H1 (cell line): ENCODE measurements at regions of chr6 and their contacts with region 1.

Region 1: DNA sequence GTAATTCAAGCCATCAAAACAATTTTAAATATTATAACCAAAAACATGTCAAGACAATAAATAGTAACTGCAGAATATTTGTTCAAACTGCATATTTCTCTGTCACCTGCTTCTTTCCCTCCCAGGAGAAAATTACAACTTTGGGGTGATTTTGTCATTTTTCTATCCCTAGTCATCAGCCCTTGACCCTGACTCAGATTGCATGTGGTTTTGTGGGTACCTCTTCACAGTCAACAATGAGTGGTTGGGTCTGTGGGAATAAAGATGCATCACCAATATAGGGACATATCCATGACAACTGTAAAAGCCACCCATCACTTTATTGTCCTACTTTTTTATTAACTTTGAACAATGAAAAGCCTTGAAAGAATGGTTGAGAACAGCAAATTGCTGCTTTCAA is 7.3 kb downstream of the COL10A1 start:
- DNase-seq: no peak
- H3K4me3 ChIP-seq: no peak overlapping the region
- H3K27ac ChIP-seq: no peak overlapping the region
- H3K4me1 ChIP-seq: no peaks in the 10 kb centered on the region
- H3K27me3 ChIP-seq: no peaks in the 10 kb centered on the region
- CTCF ChIP-seq: no peak
- EP300 ChIP-seq: no peak
- POLR2A ChIP-seq: no peak
- RAD21 ChIP-seq: no peak

Region 2: DNA sequence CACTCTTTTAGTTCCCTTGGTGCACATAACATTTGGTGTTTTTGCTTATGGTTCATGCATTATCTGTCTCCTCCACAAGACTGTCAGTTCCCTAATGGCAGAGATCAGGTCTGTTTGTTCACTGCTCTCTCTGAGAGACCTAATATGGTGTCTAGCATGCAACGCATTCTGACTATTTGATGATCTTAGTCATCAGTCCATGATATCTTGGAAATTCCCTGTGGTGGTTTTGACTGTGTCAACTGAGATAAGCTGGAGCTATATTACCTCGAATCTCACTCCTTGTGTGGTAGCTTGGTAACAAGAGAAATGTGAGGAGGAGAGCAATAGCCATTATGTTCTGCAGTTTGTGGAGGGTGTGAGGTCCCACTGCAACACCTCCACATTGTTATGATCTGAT is 287.7 kb before region 1 on chr6:
- CTCF ChIA-PET with region 1: no interaction called
- POLR2A ChIA-PET with region 1: no interaction called
- DNase-seq: no peak
- H3K4me3 ChIP-seq: no peak overlapping the region
- H3K27ac ChIP-seq: no peak overlapping the region
- H3K4me1 ChIP-seq: peaks cover 0 to 2% (median 0%) of the 10 kb centered on the region in 4 experiments; a peak in 1 of 7 replicates
- H3K27me3 ChIP-seq: no peaks in the 10 kb centered on the region
- CTCF ChIP-seq: no peak
- EP300 ChIP-seq: no peak
- POLR2A ChIP-seq: no peak
- RAD21 ChIP-seq: no peak

Region 3: DNA sequence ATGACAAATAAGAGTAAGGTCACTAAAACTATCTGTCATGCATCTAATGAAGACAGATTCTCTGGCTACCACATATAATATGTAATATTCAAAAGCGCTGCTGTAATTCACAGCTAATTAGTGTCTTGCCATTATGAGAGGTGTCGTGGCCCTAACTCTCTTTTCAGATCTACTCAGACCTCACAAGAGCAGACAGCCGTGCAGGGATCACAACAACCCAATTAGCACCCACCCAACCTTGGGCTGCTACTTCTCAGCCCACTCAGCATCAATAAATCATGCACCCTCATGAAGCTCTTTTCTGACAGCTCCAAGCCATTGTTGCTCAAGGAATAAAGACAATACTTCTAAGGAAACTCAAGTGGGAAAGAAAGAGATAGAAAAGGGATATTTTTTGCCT is 119.4 kb before region 1 on chr6:
- CTCF ChIA-PET with region 1: no interaction called
- POLR2A ChIA-PET with region 1: no interaction called
- DNase-seq: no peak
- H3K4me3 ChIP-seq: no peak overlapping the region
- H3K27ac ChIP-seq: no peak overlapping the region
- H3K4me1 ChIP-seq: no peaks in the 10 kb centered on the region
- H3K27me3 ChIP-seq: no peaks in the 10 kb centered on the region
- CTCF ChIP-seq: no peak
- EP300 ChIP-seq: no peak
- POLR2A ChIP-seq: no peak
- RAD21 ChIP-seq: no peak

Region 4: DNA sequence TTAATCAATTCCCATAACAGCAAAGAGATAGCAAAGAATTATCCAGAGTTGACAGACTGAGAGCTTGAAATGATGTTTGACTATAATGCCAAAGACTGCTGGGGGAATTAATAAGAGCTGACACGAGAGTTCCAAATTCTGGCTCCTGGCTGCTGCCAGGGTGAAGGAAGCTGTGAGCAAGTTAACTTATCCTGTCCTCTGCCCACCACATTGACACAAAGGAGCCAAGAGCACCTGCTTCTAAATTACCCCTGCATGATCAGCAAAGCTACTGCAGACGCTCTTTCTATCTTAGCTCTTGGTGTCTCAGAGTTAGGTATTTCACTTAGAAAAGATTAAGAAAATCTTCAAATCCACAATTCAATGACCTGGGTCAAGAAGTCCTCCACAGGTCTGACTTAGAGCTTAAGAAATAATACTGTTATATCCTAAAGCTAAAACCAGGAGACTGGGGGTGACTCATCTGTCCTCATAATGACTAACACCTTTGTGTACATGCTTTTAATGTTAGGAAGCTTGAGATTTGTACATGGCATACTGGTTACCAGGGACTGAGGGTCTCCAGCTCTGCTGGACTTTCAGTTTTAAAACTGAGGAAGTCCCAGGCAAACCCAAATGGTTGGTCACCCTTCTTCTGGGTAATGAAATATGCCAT is 44.7 kb before region 1 on chr6:
- CTCF ChIA-PET with region 1: no interaction called
- POLR2A ChIA-PET with region 1: no interaction called
- DNase-seq: no peak
- H3K4me3 ChIP-seq: no peak overlapping the region
- H3K27ac ChIP-seq: no peak overlapping the region
- H3K4me1 ChIP-seq: no peaks in the 10 kb centered on the region
- H3K27me3 ChIP-seq: peaks cover 0 to 1% (median 0%) of the 10 kb centered on the region in 4 experiments; a peak in 1 of 7 replicates
- CTCF ChIP-seq: no peak
- EP300 ChIP-seq: no peak
- POLR2A ChIP-seq: no peak
- RAD21 ChIP-seq: no peak

Region 5: DNA sequence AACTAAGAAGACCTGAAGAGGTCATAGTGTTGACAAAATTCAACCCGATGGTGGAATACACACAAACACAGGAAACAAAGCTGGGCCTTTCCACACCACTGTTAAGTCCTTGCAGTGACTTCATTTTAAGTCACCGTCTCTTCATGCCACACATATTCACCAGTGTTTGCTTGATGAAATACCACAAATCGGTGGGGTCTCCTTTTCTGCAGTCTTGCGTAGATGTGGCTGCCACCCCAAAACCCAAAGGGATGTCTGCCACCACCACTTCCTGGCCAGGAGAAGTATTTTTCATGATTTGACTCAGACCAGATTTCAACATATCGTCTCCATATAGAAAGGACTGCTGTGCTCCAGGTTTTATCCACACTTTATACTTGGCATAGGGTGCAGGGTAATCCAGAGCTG is 18.3 kb after region 1 on chr6:
- CTCF ChIA-PET with region 1: interaction called, 13 read pairs
- POLR2A ChIA-PET with region 1: interaction called, 5 read pairs
- DNase-seq: no peak
- H3K4me3 ChIP-seq: no peak overlapping the region
- H3K27ac ChIP-seq: no peak overlapping the region
- H3K4me1 ChIP-seq: peaks cover 0 to 8% (median 5%) of the 10 kb centered on the region in 4 experiments; a peak in 2 of 7 replicates
- H3K27me3 ChIP-seq: no peaks in the 10 kb centered on the region
- CTCF ChIP-seq: no peak
- EP300 ChIP-seq: no peak
- POLR2A ChIP-seq: no peak
- RAD21 ChIP-seq: no peak

Region 6: GRCh38 chr6:116176596-116176995 is 58.0 kb after region 1 on chr6:
- CTCF ChIA-PET with region 1: no interaction called
- POLR2A ChIA-PET with region 1: no interaction called
- DNase-seq: no peak
- H3K4me3 ChIP-seq: no peak overlapping the region
- H3K27ac ChIP-seq: no peak overlapping the region
- H3K4me1 ChIP-seq: peaks cover 0 to 4% (median 0%) of the 10 kb centered on the region in 4 experiments; a peak in 1 of 7 replicates
- H3K27me3 ChIP-seq: no peaks in the 10 kb centered on the region
- CTCF ChIP-seq: no peak
- EP300 ChIP-seq: no peak
- POLR2A ChIP-seq: no peak
- RAD21 ChIP-seq: no peak